Panc1 (cell line): ENCODE measurements at regions of chr1 and their contacts with region 1.

Region 1: DNA sequence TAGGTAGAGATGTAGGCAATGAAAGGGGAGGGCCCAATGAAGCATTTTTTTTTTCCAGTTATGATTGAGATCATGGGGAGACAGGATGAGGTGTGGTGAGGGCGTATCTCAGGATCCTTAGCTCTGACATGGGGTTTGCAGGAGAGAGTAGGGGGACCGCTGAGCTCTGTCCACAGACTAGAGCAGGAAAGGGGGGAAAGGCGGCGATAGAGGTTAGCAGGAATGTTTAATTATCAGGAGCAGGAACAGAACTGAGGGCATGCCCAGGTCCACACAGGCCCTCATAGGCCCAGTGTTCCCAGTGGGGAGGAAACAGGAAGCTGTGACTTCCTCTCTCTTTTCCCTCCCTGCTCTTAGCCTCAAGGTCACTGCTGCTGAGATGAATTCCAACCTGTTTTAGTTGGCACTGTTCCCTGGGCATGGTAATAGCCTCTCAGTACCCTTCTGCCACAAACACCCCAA is 876 bp upstream of the RXFP4 start:
- DNase-seq: peak; percentile 36
- ATAC-seq: peak; percentile 55
- H3K4me3 ChIP-seq: peak overlapping the region in 1 of 2 experiments; percentile 51; a peak in 2 of 4 replicates
- H3K27ac ChIP-seq: peak overlapping the region; percentile 99
- H3K4me1 ChIP-seq: peaks cover 58% of the 10 kb centered on the region
- H3K27me3 ChIP-seq: no peaks in the 10 kb centered on the region
- CTCF ChIP-seq: no peak

Region 2: GRCh38 chr1:155609515-155610256 is 330.9 kb before region 1 on chr1 and contains the start of gene MSTO1:
- CTCF ChIA-PET with region 1: no interaction called
- POLR2A ChIA-PET with region 1: no interaction called
- in situ Hi-C with region 1: no loop called
- intact Hi-C with region 1: no loop called
- DNase-seq: peak; percentile 80
- ATAC-seq: peak; percentile 97
- H3K4me3 ChIP-seq: peak within 1 kb of the TSS; percentile 62 to 69
- H3K27ac ChIP-seq: peak within 1 kb of the TSS; percentile 97
- H3K4me1 ChIP-seq: no peaks in the 10 kb centered on the region
- H3K27me3 ChIP-seq: no peaks in the 10 kb centered on the region
- CTCF ChIP-seq: no peak
- total RNA-seq, gene MSTO1: 60.9 TPM

Region 3: GRCh38 chr1:155989242-155990004 is 48.9 kb after region 1 on chr1:
- CTCF ChIA-PET with region 1: interaction called, 16 read pairs
- POLR2A ChIA-PET with region 1: interaction called, 7 read pairs
- in situ Hi-C with region 1: no loop called
- intact Hi-C with region 1: loop called (anchors 1 kb)
- DNase-seq: peak; percentile 74
- ATAC-seq: peak; percentile 91
- H3K4me3 ChIP-seq: no peak overlapping the region
- H3K27ac ChIP-seq: peak overlapping the region; percentile 46; the same call in 1 of the 2 replicates
- H3K4me1 ChIP-seq: peaks cover 2% of the 10 kb centered on the region; the same call in 1 of the 2 replicates
- H3K27me3 ChIP-seq: no peaks in the 10 kb centered on the region
- CTCF ChIP-seq: peak; percentile 97

Region 4: DNA sequence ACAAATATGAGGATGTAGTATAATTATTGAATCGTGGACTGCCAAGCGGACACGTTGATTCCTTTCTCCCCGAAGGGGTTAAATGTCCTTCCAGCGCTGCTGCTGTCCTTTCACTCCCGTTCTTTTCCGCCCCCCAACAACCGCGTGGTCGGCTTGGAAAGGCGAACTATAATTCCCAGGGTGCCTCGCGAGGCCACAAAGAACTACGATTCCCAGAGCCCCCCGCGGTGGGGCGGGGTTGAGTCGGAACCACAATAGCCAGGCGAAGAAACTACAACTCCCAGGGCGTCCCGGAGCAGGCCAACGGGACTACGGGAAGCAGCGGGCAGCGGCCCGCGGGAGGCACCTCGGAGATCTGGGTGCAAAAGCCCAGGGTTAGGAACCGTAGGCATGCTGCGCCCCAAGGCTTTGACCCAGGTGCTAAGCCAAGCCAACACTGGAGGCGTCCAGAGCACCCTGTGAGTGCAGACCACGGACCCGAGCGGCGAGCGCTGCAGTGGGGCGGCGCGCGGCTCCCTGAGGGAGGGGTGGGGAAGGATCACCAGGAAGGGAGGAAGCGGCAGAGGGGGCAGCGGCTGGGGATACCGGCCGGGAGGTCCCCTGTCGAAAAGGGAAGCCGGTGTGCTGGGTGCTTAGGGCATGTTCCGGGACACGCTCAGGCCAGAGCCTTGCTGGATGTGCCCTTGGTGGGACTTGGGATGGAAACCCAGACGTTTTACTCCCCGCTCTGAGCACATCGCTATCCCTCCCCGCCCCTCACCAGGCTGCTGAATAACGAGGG is 114.1 kb after region 1 on chr1 and contains the start of gene LAMTOR2:
- CTCF ChIA-PET with region 1: no interaction called
- POLR2A ChIA-PET with region 1: no interaction called
- in situ Hi-C with region 1: no loop called
- intact Hi-C with region 1: loop called (anchors 5 kb)
- DNase-seq: peak; percentile 95
- ATAC-seq: peak; percentile 91
- H3K4me3 ChIP-seq: peak within 1 kb of the TSS; percentile 87 to 96
- H3K27ac ChIP-seq: peak within 1 kb of the TSS; percentile 99
- H3K4me1 ChIP-seq: peaks cover 7% of the 10 kb centered on the region; the same call in 1 of the 2 replicates
- H3K27me3 ChIP-seq: no peaks in the 10 kb centered on the region
- CTCF ChIP-seq: no peak
- total RNA-seq, gene LAMTOR2: 63.4 TPM